Naive thymus-derived CD4-positive, alpha-beta T cell (primary cell): ENCODE measurements at regions of chr10 and their contacts with region 1.

Region 1: GRCh38 chr10:58268870-58269605 is at the start of gene CISD1:
- DNase-seq: peak; percentile 84 to 96 (median 95)
- ATAC-seq: peak; percentile 69
- H3K4me3 ChIP-seq: peak within 1 kb of the TSS; percentile 73
- H3K4me3 Mint-ChIP-seq: peak within 1 kb of the TSS; percentile 89 to 99 (median 98)
- H3K27ac ChIP-seq: peak within 1 kb of the TSS; percentile 77
- H3K27ac Mint-ChIP-seq: peak within 1 kb of the TSS; percentile 91 to 97 (median 96)
- H3K4me1 ChIP-seq: peaks cover 18 to 20% of the 10 kb centered on the region in 2 donors
- H3K4me1 Mint-ChIP-seq: peaks cover 11 to 50% (median 40%) of the 10 kb centered on the region in 7 donors
- H3K27me3 ChIP-seq: no peaks in the 10 kb centered on the region
- H3K27me3 Mint-ChIP-seq: peaks cover 0 to 2% (median 0%) of the 10 kb centered on the region in 5 donors
- total RNA-seq, gene CISD1: 5.1 to 45.7 (median 9.2) TPM

Region 2: GRCh38 chr10:58177362-58177947 is 91.6 kb before region 1 on chr10:
- CTCF ChIA-PET with region 1: interaction called, 9 read pairs
- POLR2A ChIA-PET with region 1: no interaction called
- intact Hi-C with region 1: loop called (anchors 1 kb)
- DNase-seq: peak in 3 of 9 donors; percentile 12 to 29 (median 25)
- ATAC-seq: no peak
- H3K4me3 ChIP-seq: no peak overlapping the region
- H3K4me3 Mint-ChIP-seq: no peak overlapping the region
- H3K27ac ChIP-seq: no peak overlapping the region
- H3K27ac Mint-ChIP-seq: no peak overlapping the region
- H3K4me1 ChIP-seq: no peaks in the 10 kb centered on the region
- H3K4me1 Mint-ChIP-seq: no peaks in the 10 kb centered on the region
- H3K27me3 ChIP-seq: no peaks in the 10 kb centered on the region
- H3K27me3 Mint-ChIP-seq: peaks cover 0 to 4% (median 0%) of the 10 kb centered on the region in 5 donors

Region 3: DNA sequence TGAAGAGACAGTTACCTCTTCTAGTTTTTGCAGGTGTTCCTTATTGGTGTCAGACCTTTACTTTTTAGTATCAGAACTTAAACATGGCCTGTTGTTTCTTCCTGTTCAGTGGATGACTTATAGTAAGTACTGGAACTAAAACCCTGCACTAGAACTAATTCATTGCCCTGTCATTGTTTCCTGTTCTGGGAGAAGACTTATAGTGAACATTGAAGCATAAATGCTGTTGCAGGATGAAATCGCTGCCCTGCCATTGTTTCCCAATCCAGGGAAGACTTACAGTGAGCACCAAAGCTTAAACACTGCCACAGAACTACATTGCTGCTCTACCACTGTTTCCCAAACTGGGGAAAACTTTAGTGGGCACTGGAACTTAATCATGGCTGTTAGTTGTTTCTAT is 14.4 kb before region 1 on chr10:
- CTCF ChIA-PET with region 1: no interaction called
- POLR2A ChIA-PET with region 1: no interaction called
- intact Hi-C with region 1: loop called in 1 of 2 experiments (anchors 2 kb)
- DNase-seq: no peak
- ATAC-seq: no peak
- H3K4me3 ChIP-seq: no peak overlapping the region
- H3K4me3 Mint-ChIP-seq: no peak overlapping the region
- H3K27ac ChIP-seq: no peak overlapping the region
- H3K27ac Mint-ChIP-seq: no peak overlapping the region
- H3K4me1 ChIP-seq: peaks cover 0 to 4% of the 10 kb centered on the region in 2 donors
- H3K4me1 Mint-ChIP-seq: peaks cover 9 to 31% (median 25%) of the 10 kb centered on the region in 7 donors
- H3K27me3 ChIP-seq: no peaks in the 10 kb centered on the region
- H3K27me3 Mint-ChIP-seq: no peaks in the 10 kb centered on the region

Region 4: DNA sequence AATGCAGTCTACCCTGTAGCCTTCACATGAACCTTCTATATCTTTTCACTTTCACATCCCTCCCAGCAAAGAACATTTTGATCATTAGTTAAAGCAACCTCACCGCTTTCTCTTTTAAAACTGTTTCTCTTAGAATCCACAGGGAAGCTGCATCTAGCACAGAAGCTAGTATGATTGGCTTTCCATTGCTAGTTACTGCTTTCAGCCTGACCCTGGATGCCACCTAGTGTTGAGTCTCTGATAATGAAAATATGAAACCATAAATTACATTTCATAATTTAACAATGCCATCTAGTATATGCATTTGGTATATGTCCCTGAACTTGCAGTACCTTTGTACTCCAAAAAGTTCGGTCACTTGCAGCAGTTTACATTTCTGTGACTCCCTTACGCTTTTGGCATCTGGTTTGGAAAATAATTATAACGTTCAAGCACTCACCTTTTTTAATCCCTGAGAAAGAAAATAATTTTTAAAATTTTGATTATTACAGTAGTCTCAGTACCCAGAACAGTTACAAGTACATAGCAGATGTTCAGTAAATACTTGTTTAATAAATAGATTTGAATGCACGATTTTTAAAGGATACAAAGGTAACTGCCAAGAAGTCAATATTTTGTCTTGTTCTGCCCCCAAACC is 22.6 kb after region 1 on chr10:
- CTCF ChIA-PET with region 1: interaction called, 4 read pairs
- POLR2A ChIA-PET with region 1: interaction called, 3 read pairs
- intact Hi-C with region 1: loop called (anchors 1 to 2 kb)
- DNase-seq: peak in 7 of 9 donors; percentile 23 to 59 (median 44)
- ATAC-seq: peak; percentile 86
- H3K4me3 ChIP-seq: no peak overlapping the region
- H3K4me3 Mint-ChIP-seq: no peak overlapping the region
- H3K27ac ChIP-seq: no peak overlapping the region
- H3K27ac Mint-ChIP-seq: peak overlapping the region in 2 of 9 donors; percentile 60 to 76
- H3K4me1 ChIP-seq: no peaks in the 10 kb centered on the region
- H3K4me1 Mint-ChIP-seq: peaks cover 0 to 5% (median 3%) of the 10 kb centered on the region in 7 donors
- H3K27me3 ChIP-seq: no peaks in the 10 kb centered on the region
- H3K27me3 Mint-ChIP-seq: no peaks in the 10 kb centered on the region

Region 5: GRCh38 chr10:58372607-58373441 is 103.8 kb after region 1 on chr10:
- CTCF ChIA-PET with region 1: no interaction called
- POLR2A ChIA-PET with region 1: no interaction called
- intact Hi-C with region 1: no loop called
- DNase-seq: no peak
- ATAC-seq: no peak
- H3K4me3 ChIP-seq: no peak overlapping the region
- H3K4me3 Mint-ChIP-seq: no peak overlapping the region
- H3K27ac ChIP-seq: no peak overlapping the region
- H3K27ac Mint-ChIP-seq: no peak overlapping the region
- H3K4me1 ChIP-seq: no peaks in the 10 kb centered on the region
- H3K4me1 Mint-ChIP-seq: no peaks in the 10 kb centered on the region
- H3K27me3 ChIP-seq: no peaks in the 10 kb centered on the region
- H3K27me3 Mint-ChIP-seq: no peaks in the 10 kb centered on the region

Region 6: DNA sequence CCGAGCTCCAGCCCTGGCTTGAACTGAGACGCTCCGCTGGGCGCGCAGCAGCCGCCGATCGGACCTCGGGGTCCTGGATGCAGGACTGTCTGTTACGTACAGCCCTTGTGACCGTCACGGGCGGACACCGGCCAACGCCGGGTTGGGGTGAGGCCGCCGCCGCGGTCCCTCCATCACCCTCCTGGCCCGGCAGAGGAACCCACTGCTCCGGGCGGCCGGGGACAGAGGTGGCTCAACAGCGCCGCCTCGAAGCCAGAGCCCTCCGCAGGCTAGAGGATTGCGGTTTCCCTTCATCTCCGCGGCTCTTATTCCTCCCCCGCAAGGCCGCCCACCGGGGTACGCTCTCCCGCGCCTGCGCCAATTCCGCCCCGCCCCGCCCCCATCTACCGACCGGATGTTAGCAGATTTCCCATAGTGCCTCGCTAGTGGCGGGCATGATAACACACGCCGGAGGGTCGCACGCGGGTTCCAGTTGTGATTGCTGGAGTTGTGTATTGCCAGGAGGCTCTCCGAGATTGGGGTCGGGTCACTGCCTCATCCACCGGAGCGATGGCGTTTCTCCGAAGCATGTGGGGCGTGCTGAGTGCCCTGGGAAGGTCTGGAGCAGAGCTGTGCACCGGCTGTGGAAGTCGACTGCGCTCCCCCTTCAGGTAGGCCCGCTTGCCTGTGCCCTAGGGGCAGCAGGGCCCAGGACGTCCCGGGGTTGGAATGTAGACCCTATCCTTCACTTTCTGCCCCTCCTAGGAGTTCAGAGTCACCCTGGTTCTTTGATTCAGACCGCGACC is 116.2 kb after region 1 on chr10 and contains the start of gene TFAM:
- CTCF ChIA-PET with region 1: interaction called, 5 read pairs
- POLR2A ChIA-PET with region 1: interaction called, 18 read pairs
- intact Hi-C with region 1: loop called (anchors 1 kb)
- DNase-seq: peak; percentile 90 to 97 (median 93)
- ATAC-seq: peak; percentile 91
- H3K4me3 ChIP-seq: peak within 1 kb of the TSS; percentile 95
- H3K4me3 Mint-ChIP-seq: peak within 1 kb of the TSS; percentile 96 to 99 (median 98)
- H3K27ac ChIP-seq: peak within 1 kb of the TSS; percentile 86
- H3K27ac Mint-ChIP-seq: peak within 1 kb of the TSS; percentile 91 to 98 (median 96)
- H3K4me1 ChIP-seq: peaks cover 20 to 30% of the 10 kb centered on the region in 2 donors
- H3K4me1 Mint-ChIP-seq: peaks cover 24 to 61% (median 53%) of the 10 kb centered on the region in 7 donors
- H3K27me3 ChIP-seq: no peaks in the 10 kb centered on the region
- H3K27me3 Mint-ChIP-seq: no peaks in the 10 kb centered on the region
- total RNA-seq, gene TFAM: 33.1 to 63.2 (median 44.8) TPM